Left cardiac atrium (tissue), 4 donors: ENCODE measurements at regions of chr18 and their contacts with region 1.

Region 1: DNA sequence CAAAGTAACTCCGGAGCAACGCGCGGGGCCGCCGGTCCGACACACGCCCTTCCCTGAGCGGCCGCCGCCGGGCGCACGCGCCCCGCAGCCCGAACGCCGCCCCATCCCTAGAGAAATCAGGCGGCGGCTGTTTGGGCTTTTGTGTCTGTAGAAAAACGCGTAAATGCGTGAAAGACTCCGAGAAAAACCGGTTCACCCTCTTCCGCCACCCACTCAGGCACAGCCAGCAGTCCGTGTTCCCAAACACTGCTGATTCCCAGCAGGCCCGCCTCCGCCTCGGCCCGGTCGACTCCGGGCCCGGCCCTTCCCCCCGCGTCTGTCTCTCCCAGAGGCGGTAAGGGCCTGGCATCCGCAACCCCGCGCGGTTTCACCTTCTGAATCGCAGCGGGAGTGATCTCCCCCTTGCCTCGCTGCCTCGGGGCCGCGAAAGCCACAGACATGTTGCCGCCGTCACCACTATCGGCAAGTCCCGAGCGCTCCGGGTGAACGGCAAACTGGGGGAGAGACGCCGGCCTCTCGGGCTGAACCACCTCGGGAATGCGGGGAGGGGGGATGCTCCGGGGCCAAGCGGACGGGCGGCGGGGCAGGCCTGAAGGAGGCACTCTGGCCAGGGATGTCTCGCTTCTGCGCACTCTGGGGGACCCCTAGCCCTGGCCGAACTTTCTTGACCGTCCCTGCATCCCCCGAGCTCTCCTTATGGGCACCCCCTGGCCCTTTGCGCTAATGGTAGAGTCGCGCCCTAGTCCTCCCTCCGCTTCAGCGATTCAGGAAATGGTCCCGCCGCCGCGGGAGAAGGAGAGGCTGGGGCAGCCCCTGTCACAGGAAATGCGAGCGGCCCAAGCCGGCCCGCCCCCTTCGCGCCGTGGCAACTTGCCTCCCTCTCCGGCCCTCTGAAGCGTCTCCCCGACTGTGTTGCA is at the start of gene SS18:
- DNase-seq: peak; percentile 96
- ATAC-seq: peak; percentile 96 to 98
- total RNA-seq, gene SS18: 31.6 to 46.9 TPM

Region 2: GRCh38 chr18:26003356-26003755 is 87.0 kb before region 1 on chr18:
- intact Hi-C with region 1: loop called in 1 of 2 experiments (anchors 10 kb)
- DNase-seq: no peak
- ATAC-seq: no peak

Region 3: DNA sequence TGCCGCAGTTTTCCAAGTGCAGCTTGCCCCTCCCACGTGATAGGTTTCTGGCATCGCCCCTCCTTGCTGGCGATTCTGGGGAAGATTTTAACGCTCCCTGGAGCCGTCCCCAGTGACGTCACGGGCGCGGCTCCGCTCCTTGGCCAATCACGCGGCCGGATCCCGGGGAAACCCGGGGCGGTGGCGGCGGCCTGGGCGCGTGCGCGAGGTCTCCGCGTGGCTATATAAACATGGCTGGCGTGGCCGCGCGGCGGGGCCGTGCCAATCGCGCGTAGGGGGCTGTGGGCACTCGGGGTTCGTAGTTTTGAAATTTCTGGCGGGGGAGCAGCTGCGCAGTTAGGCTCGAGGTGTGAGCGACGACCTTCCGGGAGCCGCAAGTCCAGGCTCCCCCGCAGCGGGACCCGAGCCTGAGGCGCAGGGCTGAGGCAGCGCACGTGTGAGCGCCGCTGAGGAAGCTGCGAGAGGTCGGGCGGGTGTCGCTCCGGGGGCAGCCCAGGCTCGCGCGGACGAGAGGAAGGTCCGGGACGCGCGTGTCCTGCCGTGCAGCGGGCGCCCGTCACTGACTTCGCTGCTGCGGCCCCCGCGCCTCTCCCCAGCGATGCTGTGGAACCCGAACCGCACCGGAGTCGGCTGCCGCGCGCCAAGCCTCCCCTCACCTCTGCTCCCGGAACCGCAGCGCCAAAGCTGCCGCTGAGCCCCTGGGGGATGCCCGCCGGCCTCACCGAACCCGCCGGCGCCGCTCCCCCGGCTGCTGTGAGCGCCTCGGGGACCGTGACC is 136.0 kb after region 1 on chr18 and contains the start of gene TAF4B:
- intact Hi-C with region 1: loop called in 1 of 2 experiments (anchors 2 kb)
- DNase-seq: peak; percentile 96
- ATAC-seq: peak; percentile 99
- total RNA-seq, gene TAF4B: 1.5 to 2.2 TPM